Activated CD8-positive, alpha-beta memory T cell treated with anti-CD3 and anti-CD28 coated beads, Interleukin-2, amount 10 ng/mL, durations not matched to agents 7 days and 5 days (primary cell): ENCODE measurements at regions of chr15 and their contacts with region 1.

Region 1: GRCh38 chr15:68875377-68876116 is 54.8 kb upstream of the SPESP1 start:
- DNase-seq: peak; percentile 91
- ATAC-seq: peak; percentile 82
- H3K4me3 Mint-ChIP-seq: no peak overlapping the region
- H3K27ac Mint-ChIP-seq: no peak overlapping the region
- H3K4me1 Mint-ChIP-seq: peaks cover 4% of the 10 kb centered on the region
- H3K27me3 Mint-ChIP-seq: peaks cover 40% of the 10 kb centered on the region

Region 2: GRCh38 chr15:68442041-68442440 is 433.5 kb before region 1 on chr15:
- CTCF ChIA-PET with region 1: no interaction called
- DNase-seq: peak; percentile 38
- ATAC-seq: no peak
- H3K4me3 Mint-ChIP-seq: no peak overlapping the region
- H3K27ac Mint-ChIP-seq: no peak overlapping the region
- H3K4me1 Mint-ChIP-seq: no peaks in the 10 kb centered on the region
- H3K27me3 Mint-ChIP-seq: peaks cover 88% of the 10 kb centered on the region

Region 3: DNA sequence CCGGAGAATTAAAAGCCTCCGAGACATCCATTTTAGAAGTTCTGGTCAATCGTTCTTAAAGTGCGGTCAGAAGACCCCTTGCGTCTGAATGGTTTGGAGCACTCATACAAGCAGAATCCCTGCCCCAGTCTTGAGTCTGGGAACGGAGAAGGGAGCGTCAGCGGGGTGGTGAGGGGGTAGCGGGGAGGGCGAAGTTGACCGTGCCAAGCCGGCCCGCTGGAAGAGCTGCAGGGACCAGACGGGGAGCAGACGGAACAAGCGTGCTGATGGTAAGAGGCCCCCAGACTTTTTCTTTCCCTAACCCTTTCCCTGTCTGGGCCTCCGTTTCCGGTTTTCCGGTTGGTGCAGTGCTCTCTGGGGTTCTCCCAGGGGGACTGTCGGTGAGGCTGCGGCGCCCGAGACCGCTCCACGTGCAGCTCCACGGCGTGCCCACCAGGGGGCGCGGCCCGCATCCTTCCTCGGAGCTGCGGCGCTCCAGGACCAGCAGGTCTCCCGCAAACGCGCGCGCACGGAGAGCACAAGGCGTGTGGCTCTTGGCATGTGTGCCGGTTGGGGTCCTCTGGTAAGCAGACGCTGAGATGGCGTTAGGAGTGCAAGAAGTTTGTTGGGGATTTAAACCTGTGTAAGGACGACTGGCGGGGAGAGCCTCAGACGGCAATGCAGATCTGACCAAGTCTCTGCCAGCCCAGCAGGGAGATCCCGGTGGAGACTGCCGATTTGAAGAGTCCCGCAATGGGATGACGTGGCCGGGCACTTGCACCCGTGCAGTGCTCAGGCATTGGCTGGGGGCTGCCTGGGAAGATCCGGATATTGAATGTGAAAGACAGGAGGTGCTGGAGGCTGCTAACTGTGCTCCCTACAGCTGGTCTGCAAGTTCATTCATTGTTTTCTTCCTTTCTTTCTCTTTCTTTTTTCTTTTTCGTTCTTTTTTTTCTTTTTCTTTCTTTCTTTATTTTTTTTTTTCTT is 315.9 kb before region 1 on chr15:
- CTCF ChIA-PET with region 1: interaction called, 38 read pairs
- DNase-seq: peak; percentile 74
- ATAC-seq: peak; percentile 92
- H3K4me3 Mint-ChIP-seq: peak overlapping the region; percentile 56
- H3K27ac Mint-ChIP-seq: no peak overlapping the region
- H3K4me1 Mint-ChIP-seq: peaks cover 16% of the 10 kb centered on the region
- H3K27me3 Mint-ChIP-seq: peaks cover 50% of the 10 kb centered on the region

Region 4: DNA sequence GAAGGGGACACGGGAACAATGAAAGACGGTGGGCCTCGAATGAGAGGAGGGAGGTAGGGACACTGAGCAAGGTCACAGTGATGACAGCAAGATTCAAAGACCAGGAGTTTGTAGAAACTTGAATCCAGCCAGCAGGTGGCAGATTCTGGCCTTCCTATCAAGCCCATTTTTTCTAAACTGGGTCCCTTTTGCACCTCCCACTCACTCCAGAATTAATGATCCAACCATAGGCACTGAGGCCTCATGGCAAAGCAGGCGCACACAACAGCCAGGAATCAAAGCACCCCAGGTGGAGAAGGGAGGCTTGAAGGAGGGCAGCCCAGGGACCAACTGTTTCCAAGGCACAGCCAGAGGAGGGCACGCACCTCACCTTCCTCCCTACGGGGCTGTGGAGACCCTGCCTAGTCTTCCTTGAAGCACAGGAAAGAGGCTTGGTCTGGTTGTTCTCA is 145.1 kb before region 1 on chr15:
- CTCF ChIA-PET with region 1: interaction called, 19 read pairs
- DNase-seq: no peak
- ATAC-seq: no peak
- H3K4me3 Mint-ChIP-seq: no peak overlapping the region
- H3K27ac Mint-ChIP-seq: no peak overlapping the region
- H3K4me1 Mint-ChIP-seq: peaks cover 4% of the 10 kb centered on the region
- H3K27me3 Mint-ChIP-seq: peaks cover 4% of the 10 kb centered on the region

Region 5: GRCh38 chr15:68795298-68795848 is 80.2 kb before region 1 on chr15:
- CTCF ChIA-PET with region 1: interaction called, 12 read pairs
- DNase-seq: peak; percentile 82
- ATAC-seq: peak; percentile 57
- H3K4me3 Mint-ChIP-seq: peak overlapping the region; percentile 44
- H3K27ac Mint-ChIP-seq: peak overlapping the region; percentile 79
- H3K4me1 Mint-ChIP-seq: peaks cover 97% of the 10 kb centered on the region
- H3K27me3 Mint-ChIP-seq: no peaks in the 10 kb centered on the region